ENCODE measurements at regions of chr12 and their contacts with region 1.

Region 1: GRCh38 chr12:100234598-100235304 is 32.1 kb downstream of the DEPDC4 start:
- DNase-seq: peak; percentile 44
- ATAC-seq: peak; percentile 60
- H3K4me3 ChIP-seq: no peak overlapping the region
- H3K27ac ChIP-seq: no peak overlapping the region
- H3K4me1 ChIP-seq: peaks cover 5% of the 10 kb centered on the region
- H3K27me3 ChIP-seq: no peaks in the 10 kb centered on the region
- CTCF ChIP-seq: peak; percentile 69
- EP300 ChIP-seq: no peak
- POLR2A ChIP-seq: no peak
- RAD21 ChIP-seq: peak; percentile 62

Region 2: DNA sequence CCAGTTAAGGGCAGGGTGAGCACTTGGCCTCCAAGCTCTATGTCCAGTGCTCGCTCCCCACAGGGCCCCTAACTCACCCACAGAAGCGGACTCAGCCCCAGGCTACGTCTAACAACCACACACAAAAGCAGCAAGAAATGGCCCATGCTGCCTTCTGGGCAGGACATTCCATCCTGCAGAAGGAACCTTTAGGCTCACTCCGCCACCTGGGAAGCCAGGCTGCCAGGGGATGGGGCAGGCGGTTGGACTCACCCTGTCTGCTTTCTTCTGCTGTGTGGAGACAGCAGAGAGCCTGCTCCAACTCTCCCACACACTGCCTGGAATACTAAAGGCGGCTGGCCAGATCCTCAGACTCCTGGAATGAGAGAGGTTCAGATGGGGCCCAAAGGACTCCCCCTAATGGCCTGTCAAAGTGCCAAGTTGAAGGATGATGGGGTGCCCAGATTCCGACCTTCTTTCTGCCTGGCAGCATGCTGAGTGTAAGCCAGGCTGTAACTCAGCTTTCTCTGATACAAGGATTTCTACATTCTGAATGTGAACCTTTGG is 64.4 kb before region 1 on chr12:
- CTCF ChIA-PET with region 1: no interaction called
- POLR2A ChIA-PET with region 1: no interaction called
- in situ Hi-C with region 1: no loop called
- intact Hi-C with region 1: no loop called
- DNase-seq: no peak
- ATAC-seq: no peak
- H3K4me3 ChIP-seq: no peak overlapping the region
- H3K27ac ChIP-seq: no peak overlapping the region
- H3K4me1 ChIP-seq: peaks cover 17% of the 10 kb centered on the region
- H3K27me3 ChIP-seq: no peaks in the 10 kb centered on the region
- CTCF ChIP-seq: no peak
- EP300 ChIP-seq: no peak
- POLR2A ChIP-seq: no peak
- RAD21 ChIP-seq: no peak

Region 3: GRCh38 chr12:100266835-100267618 is 32.3 kb after region 1 on chr12 and contains the starts of genes DEPDC4 and SCYL2:
- CTCF ChIA-PET with region 1: no interaction called
- POLR2A ChIA-PET with region 1: no interaction called
- in situ Hi-C with region 1: no loop called
- intact Hi-C with region 1: no loop called
- DNase-seq: peak; percentile 88
- ATAC-seq: peak; percentile 88
- H3K4me3 ChIP-seq: peak within 1 kb of the TSS; percentile 91 to 93 (median 92)
- H3K27ac ChIP-seq: peak within 1 kb of the TSS; percentile 91
- H3K4me1 ChIP-seq: peaks cover 40% of the 10 kb centered on the region
- H3K27me3 ChIP-seq: no peaks in the 10 kb centered on the region; a peak in 1 of 5 replicates
- CTCF ChIP-seq: 0 out of 2 replicates have a peak, but pooled peaks have one; percentile 3
- EP300 ChIP-seq: no peak
- POLR2A ChIP-seq: peak; percentile 63 to 72
- RAD21 ChIP-seq: 0 out of 2 replicates have a peak, but pooled peaks have one; percentile 41
- total RNA-seq, gene DEPDC4: 5.7 and 6.6 TPM in 2 replicates
- total RNA-seq, gene SCYL2: 28.8 and 41.9 TPM in 2 replicates

Region 4: DNA sequence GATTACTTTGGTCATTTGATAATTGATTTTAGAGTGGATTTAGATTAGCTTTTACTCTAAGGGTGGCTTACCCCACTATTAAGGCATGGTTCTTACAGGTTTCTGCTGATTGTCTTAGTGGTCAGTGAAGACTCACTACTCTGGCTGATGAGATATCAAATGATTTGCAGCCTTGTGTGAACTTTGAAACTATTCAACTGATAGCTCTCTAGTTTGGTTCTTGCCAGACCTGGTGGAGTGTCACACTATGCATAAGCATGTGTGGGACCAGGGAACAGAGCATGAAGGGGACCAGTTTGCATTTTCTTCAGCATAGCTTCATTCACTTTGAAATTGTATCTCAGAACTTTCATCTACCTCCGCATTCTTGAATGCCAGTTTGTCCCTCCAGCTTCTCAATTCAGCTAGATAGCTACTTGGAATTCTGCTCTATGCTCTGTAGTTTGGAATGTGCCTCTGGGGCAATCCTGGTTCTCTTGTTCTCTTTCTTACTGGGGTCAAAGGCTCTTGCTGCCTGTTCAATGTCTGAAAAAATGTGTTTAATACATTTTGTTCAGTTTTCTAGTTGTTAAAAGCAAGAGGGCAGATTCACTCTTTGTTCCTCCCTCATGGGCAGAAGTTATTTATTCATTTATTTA is 45.0 kb after region 1 on chr12:
- CTCF ChIA-PET with region 1: no interaction called
- POLR2A ChIA-PET with region 1: no interaction called
- in situ Hi-C with region 1: no loop called
- intact Hi-C with region 1: loop called (anchors 2 kb)
- DNase-seq: peak; percentile 22
- ATAC-seq: peak; percentile 85
- H3K4me3 ChIP-seq: no peak overlapping the region
- H3K27ac ChIP-seq: peak overlapping the region; percentile 9
- H3K4me1 ChIP-seq: peaks cover 17% of the 10 kb centered on the region
- H3K27me3 ChIP-seq: no peaks in the 10 kb centered on the region
- CTCF ChIP-seq: no peak
- EP300 ChIP-seq: no peak
- POLR2A ChIP-seq: no peak
- RAD21 ChIP-seq: no peak

Region 5: GRCh38 chr12:100324498-100324897 is 89.7 kb after region 1 on chr12:
- CTCF ChIA-PET with region 1: no interaction called
- POLR2A ChIA-PET with region 1: no interaction called
- in situ Hi-C with region 1: no loop called
- intact Hi-C with region 1: loop called (anchors 5 kb)
- DNase-seq: no peak
- ATAC-seq: no peak
- H3K4me3 ChIP-seq: no peak overlapping the region
- H3K27ac ChIP-seq: no peak overlapping the region
- H3K4me1 ChIP-seq: no peaks in the 10 kb centered on the region
- H3K27me3 ChIP-seq: no peaks in the 10 kb centered on the region
- CTCF ChIP-seq: no peak
- EP300 ChIP-seq: no peak
- POLR2A ChIP-seq: no peak
- RAD21 ChIP-seq: no peak

Region 6: GRCh38 chr12:100554608-100555077 is 319.9 kb after region 1 on chr12:
- CTCF ChIA-PET with region 1: interaction called, 3 read pairs
- POLR2A ChIA-PET with region 1: no interaction called
- in situ Hi-C with region 1: no loop called
- intact Hi-C with region 1: loop called (anchors 2 kb)
- DNase-seq: peak; percentile 88
- ATAC-seq: peak; percentile 74
- H3K4me3 ChIP-seq: no peak overlapping the region
- H3K27ac ChIP-seq: peak overlapping the region; percentile 44
- H3K4me1 ChIP-seq: peaks cover 31% of the 10 kb centered on the region
- H3K27me3 ChIP-seq: no peaks in the 10 kb centered on the region; a peak in 1 of 5 replicates
- CTCF ChIP-seq: peak; percentile 82
- EP300 ChIP-seq: no peak
- POLR2A ChIP-seq: no peak
- RAD21 ChIP-seq: peak; percentile 84